ENCODE measurements at regions of chr1 and their contacts with region 1.

Region 1: DNA sequence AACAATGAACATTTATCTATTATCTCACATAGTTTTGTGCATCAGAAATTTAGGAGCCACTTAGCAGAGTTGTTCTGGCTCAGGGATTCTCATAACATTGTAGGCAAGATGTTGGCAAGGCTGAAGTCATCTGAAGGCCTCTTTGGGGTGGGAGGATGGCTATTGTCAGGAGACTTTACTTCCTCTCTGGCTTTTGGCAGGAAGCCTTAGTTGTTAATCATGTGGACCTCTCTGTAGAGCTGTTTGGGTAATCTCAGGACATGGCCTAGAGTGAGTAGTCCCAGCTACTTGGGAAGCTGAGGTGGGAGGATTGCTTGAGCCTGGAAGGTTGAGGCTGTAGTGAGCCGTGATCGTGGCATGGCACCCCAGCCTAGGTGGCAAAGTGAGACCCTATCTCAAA is 40.2 kb downstream of the RASAL2 start:
- DNase-seq: peak in 1 of 2 donors; percentile 69
- ATAC-seq: peak; percentile 88 to 97 (median 92)
- H3K4me3 ChIP-seq: no peak overlapping the region
- H3K27ac ChIP-seq: peak overlapping the region in 6 of 10 donors; percentile 18 to 75 (median 46)
- H3K4me1 ChIP-seq: peaks cover 3 to 57% (median 41%) of the 10 kb centered on the region in 9 donors
- H3K27me3 ChIP-seq: no peaks in the 10 kb centered on the region
- CTCF ChIP-seq: no peak

Region 2: GRCh38 chr1:178037503-178038253 is 96.4 kb before region 1 on chr1:
- intact Hi-C with region 1: loop called in 1 of 10 experiments (anchors 5 kb)
- DNase-seq: peak; percentile 89 to 95
- ATAC-seq: peak; percentile 96 to 100 (median 98)
- H3K4me3 ChIP-seq: peak overlapping the region; percentile 19 to 93 (median 77)
- H3K27ac ChIP-seq: peak overlapping the region; percentile 35 to 93 (median 88)
- H3K4me1 ChIP-seq: peaks cover 0 to 43% (median 19%) of the 10 kb centered on the region in 9 donors
- H3K27me3 ChIP-seq: no peaks in the 10 kb centered on the region
- CTCF ChIP-seq: peak; percentile 27 to 73 (median 54)

Region 3: DNA sequence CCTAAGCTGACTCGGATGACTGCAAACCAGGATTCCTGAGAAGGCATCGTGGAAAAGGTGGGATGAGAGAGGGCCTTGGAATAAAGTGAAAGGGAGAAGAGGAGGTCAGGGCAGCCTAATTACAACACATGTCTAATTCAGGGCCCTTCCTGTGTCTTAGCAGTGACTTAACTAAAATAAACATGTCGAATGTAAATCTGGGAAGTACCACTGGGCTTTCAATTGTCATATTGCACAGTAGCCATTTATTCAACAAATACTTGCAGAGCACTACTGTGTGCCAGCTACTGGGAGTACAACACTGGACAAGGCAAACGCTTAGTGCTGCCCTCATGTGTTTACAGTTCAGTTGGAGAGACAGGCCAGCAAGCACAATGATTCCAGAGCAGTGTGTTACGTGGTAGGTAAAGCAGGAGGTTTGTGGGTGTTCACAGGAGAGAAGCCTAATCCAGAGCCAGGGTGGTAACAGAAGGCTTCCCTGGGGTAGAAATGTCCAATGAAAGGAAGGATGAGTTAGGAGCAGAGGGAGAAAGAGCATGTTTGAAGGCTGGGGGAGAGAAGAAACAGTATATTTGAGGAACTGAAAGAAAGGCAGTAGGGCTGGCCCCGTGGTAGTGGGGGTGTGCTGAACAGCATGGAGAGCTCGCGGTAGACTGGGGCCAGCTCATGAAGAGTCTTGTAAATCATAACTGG is 78.1 kb before region 1 on chr1:
- intact Hi-C with region 1: loop called in 1 of 10 experiments (anchors 10 kb)
- DNase-seq: peak in 1 of 2 donors; percentile 38
- ATAC-seq: peak in 6 of 8 donors; percentile 43 to 64 (median 48)
- H3K4me3 ChIP-seq: no peak overlapping the region
- H3K27ac ChIP-seq: peak overlapping the region; percentile 72 to 95 (median 82)
- H3K4me1 ChIP-seq: peaks cover 31 to 97% (median 90%) of the 10 kb centered on the region in 9 donors
- H3K27me3 ChIP-seq: no peaks in the 10 kb centered on the region
- CTCF ChIP-seq: peak in 7 of 9 donors; percentile 4 to 53 (median 26)

Region 4: GRCh38 chr1:178101654-178102053 is 32.4 kb before region 1 on chr1:
- intact Hi-C with region 1: loop called in 1 of 10 experiments (anchors 5 kb)
- DNase-seq: peak in 1 of 2 donors; percentile 48
- ATAC-seq: peak in 6 of 8 donors; percentile 43 to 67 (median 48)
- H3K4me3 ChIP-seq: no peak overlapping the region
- H3K27ac ChIP-seq: peak overlapping the region in 8 of 10 donors; percentile 1 to 97 (median 56)
- H3K4me1 ChIP-seq: peaks cover 7 to 91% (median 69%) of the 10 kb centered on the region in 9 donors
- H3K27me3 ChIP-seq: no peaks in the 10 kb centered on the region
- CTCF ChIP-seq: no peak